ENCODE measurements at regions of chr11 and their contacts with region 1.

Region 1: DNA sequence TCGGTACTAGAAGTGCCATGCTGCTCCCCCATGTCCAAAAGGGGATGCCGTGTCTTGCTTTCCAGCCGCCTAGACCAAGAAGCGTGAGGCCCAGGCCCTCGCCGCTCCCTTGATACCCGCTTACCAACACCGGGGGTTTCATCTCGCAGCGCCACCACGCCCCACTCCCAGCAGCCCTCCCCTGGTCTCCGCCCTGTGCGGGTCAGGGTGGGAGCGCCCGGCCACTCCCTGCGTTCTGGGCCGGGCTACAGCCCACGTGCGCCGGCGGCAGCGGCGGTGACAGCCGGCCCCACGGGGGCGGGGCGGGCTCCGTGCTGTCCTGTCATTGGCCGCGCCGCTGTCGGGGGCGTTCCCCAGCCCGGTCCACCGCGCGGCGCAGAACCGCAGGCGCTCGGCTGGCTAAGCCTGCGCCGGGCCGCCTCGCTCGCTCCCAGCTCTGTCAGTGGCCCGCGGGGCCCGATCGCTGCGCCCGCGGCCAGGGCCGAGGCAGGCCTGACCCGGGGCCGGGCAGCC is at the start of gene MICAL2:
- DNase-seq: peak; percentile 61 to 94
- H3K4me3 ChIP-seq: peak within 1 kb of the TSS; percentile 89 to 91
- H3K27ac ChIP-seq: peak within 1 kb of the TSS; percentile 92 to 93
- H3K4me1 ChIP-seq: peaks cover 2 to 12% of the 10 kb centered on the region in 2 donors
- H3K27me3 ChIP-seq: no peaks in the 10 kb centered on the region
- CTCF ChIP-seq: no peak
- total RNA-seq, gene MICAL2: 237 TPM

Region 2: DNA sequence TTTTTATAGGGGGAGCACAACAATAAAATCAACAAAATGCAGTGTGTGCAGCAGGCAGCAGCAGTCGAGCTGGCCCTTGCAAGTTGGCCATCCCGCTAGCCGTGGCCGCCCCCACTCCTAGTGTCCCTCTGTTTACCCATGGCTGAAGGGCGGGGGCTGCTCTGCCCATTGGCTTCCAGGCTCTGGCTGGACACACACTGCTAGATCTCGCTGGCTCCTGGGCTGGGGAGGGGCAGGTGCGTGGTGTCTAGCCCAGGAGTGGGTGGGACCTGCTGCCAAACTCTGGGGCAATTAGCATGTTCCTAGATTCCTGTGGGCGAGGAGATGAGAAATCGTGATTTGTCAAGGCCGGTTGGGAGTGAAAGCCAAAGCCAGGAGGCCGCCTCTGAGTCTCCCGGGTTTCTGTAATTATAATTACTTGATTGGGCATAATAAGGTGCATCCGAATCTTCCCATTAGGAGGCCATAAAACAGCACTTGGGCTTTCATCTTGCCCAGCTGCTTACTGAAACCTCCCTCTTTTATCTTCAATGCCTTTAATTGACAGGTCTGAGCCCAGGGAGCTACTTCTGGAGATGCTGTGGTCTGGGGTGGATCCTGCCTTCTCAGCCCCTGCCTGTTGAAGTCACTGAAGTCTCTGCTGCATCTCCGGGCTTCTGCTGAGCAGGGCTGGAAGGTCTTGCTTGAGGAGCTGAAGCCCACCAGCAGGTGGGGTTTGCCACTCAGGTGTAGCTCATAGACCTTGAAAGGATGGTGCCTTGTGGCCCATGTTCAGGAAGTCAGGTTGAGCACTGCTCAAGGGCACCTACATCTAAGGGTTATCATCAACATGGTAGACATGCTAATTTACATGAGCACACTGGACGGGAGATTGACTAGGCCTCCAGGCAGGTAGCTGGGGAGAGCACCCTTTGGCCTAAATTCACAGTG is 57.3 kb before region 1 on chr11:
- intact Hi-C with region 1: loop called (anchors 10 kb)
- DNase-seq: peak in 1 of 2 donors; percentile 58
- H3K4me3 ChIP-seq: no peak overlapping the region
- H3K27ac ChIP-seq: peak overlapping the region; percentile 41 to 62
- H3K4me1 ChIP-seq: peaks cover 0 to 25% of the 10 kb centered on the region in 2 donors
- H3K27me3 ChIP-seq: no peaks in the 10 kb centered on the region
- CTCF ChIP-seq: no peak

Region 3: DNA sequence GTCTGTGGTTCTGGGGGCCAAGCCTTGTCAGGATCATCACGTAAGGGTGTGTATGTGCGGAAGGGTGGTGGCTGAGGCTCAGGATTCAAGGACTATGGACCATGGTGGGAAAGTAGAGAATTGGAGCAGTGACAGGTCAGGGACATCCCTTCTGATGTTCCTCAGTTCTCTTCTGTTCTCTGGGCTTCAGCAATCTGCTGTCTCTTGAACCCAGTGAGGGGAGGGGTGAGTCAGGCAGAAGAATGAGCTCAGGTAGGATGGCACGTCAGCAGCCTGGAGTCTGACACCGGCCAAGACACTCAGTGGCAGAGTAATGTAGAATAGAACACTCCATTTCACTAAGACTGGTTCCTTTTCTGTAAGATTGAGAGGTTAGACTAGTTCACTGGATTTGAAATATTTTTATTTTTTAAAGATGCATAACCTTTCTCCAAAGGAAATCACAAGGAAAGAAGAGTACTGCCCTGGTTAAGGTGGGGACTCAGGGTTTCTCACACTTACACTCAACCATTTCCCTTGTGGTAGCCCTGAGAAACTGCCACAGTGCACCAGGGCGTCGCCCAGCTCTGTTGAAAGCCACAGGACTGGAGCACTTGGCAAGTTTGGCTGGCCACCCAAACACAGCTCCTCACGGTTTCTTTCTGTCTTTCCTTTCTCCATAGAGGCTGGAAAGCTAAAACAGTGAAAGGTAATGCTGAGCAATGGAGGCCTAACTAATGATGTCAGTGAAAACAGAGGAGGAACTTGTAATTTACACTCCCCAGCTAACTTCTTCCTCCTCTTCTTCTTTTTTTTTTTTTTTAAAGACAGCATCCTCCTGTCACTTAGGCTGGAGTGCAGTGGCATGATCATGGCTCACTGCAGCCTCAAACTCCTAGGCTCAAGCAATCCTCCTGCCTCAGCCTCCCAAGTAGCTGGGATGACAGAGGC is 22.9 kb before region 1 on chr11:
- intact Hi-C with region 1: loop called (anchors 1 kb)
- DNase-seq: peak in 1 of 2 donors; percentile 82
- H3K4me3 ChIP-seq: peak overlapping the region; percentile 46 to 69
- H3K27ac ChIP-seq: peak overlapping the region; percentile 98 to 99
- H3K4me1 ChIP-seq: peaks cover 24 to 59% of the 10 kb centered on the region in 2 donors
- H3K27me3 ChIP-seq: no peaks in the 10 kb centered on the region
- CTCF ChIP-seq: peak; percentile 20 to 35 (median 27)

Measured in ascending aorta (tissue), 2 donors.